ENCODE measurements at regions of chr19 and their contacts with region 1.

Region 1: DNA sequence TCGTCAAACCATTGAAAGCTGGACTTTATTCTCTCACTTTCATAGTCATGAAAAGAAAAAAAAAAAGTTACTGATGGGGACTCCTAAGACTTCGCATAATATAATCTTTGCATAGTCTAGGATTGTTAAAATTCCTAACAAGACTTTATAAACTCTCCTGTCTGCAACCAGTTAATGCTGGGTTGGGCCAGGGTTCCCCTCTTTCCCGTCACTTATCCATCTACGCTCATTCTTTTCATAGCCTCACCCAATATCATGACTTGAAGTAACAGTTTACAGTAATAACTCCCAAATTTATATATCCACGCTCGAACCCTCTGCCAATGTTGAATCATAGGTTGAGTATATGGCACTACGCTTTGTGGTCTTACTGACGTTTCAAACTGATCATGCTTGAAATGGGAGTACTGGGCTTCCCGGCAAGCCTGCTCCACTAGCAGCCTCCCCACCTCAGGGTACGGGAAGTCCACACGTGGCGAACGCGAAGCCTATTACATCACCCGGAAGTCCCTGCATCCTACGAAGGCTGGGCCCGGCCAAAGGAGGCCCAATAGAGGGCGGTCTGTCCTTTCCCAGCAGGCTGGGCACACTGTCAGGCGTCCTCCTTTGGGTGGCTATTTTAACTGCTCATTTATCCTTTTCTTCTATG is 743 bp upstream of the ZNF460 start:
- DNase-seq: peak; percentile 93
- ATAC-seq: peak; percentile 84
- H3K4me3 ChIP-seq: peak overlapping the region; percentile 100
- H3K27ac ChIP-seq: peak overlapping the region; percentile 90
- H3K4me1 ChIP-seq: peaks cover 50% of the 10 kb centered on the region
- H3K27me3 ChIP-seq: no peaks in the 10 kb centered on the region
- CTCF ChIP-seq: peak; percentile 58

Region 2: DNA sequence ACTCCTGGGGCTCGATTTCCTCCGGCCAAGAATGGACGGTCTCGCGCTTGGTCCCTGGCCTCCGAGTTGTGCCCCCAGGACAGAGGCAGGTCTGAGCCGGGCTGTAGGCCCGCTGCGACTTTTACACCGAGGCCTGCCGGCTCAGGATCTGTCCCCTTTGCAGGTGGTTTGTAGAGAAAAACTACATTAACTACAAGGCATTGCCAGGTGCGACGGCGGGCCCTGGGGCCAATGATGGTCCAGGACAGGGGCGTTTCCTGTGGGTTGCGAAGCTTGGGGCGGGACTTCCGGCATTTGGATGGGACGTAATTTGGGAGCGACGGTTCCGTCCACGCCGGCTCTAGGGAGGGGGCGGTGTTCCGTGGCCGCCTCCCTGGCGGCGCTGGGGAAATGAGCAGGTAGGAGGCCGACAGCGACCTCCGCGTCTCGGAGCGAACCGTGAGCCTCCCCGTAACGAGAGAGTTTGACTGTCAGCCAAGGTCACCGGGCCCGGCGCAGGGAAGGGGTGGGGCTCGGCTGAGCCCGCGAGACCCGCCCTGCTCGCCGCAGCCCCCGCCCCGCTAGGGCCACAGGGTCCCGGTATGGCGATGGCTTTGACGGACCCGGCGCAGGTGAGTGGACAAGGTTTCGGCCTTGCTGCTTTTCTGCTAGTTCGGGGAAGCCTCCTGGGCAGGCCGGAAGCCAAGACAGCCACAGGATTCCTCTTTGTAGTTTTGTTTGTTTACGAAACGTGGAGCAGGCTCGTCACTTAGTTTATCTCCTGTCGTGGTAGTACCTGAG is 39.0 kb before region 1 on chr19 and contains the start of gene ZNF805:
- CTCF ChIA-PET with region 1: no interaction called
- POLR2A ChIA-PET with region 1: no interaction called
- intact Hi-C with region 1: loop called (anchors 1 kb)
- DNase-seq: peak; percentile 97
- ATAC-seq: peak; percentile 98
- H3K4me3 ChIP-seq: peak within 1 kb of the TSS; percentile 77
- H3K27ac ChIP-seq: peak within 1 kb of the TSS; percentile 64
- H3K4me1 ChIP-seq: peaks cover 17% of the 10 kb centered on the region
- H3K27me3 ChIP-seq: no peaks in the 10 kb centered on the region
- CTCF ChIP-seq: peak; percentile 25; the same call in 1 of the 2 replicates
- total RNA-seq, gene ZNF805: 12.9 and 13.1 TPM in 2 replicates

Region 3: GRCh38 chr19:57320180-57321084 is 40.9 kb after region 1 on chr19 and contains the start of gene ZNF543:
- CTCF ChIA-PET with region 1: no interaction called
- POLR2A ChIA-PET with region 1: no interaction called
- intact Hi-C with region 1: loop called (anchors 1 kb)
- DNase-seq: peak; percentile 98
- ATAC-seq: peak; percentile 99
- H3K4me3 ChIP-seq: peak within 1 kb of the TSS; percentile 88
- H3K27ac ChIP-seq: peak within 1 kb of the TSS; percentile 19; the same call in 1 of the 2 replicates
- H3K4me1 ChIP-seq: peaks cover 23% of the 10 kb centered on the region
- H3K27me3 ChIP-seq: 0 out of 2 replicates have a peak, but pooled peaks cover under 1% of the 10 kb centered on the region
- CTCF ChIP-seq: no peak
- total RNA-seq, gene ZNF543: 5.2 and 7.6 TPM in 2 replicates

Measured in PC-3 (cell line).